ENCODE measurements at regions of chrX and their contacts with region 1.

Region 1: GRCh38 chrX:128816919-128817318 is 706.4 kb downstream of the SMARCA1 start:
- DNase-seq: no peak
- H3K4me3 ChIP-seq: no peak overlapping the region
- H3K27ac ChIP-seq: no peak overlapping the region
- H3K4me1 ChIP-seq: no peaks in the 10 kb centered on the region
- H3K27me3 ChIP-seq: no peaks in the 10 kb centered on the region
- CTCF ChIP-seq: peak in 2 of 3 experiments; percentile 38 to 52; a peak in 2 of 4 replicates
- EP300 ChIP-seq: no peak
- POLR2A ChIP-seq: no peak
- RAD21 ChIP-seq: peak; percentile 55 to 60

Region 2: GRCh38 chrX:128582036-128582435 is 234.9 kb before region 1 on chrX:
- CTCF ChIA-PET with region 1: no interaction called
- POLR2A ChIA-PET with region 1: no interaction called
- DNase-seq: no peak
- H3K4me3 ChIP-seq: no peak overlapping the region
- H3K27ac ChIP-seq: no peak overlapping the region
- H3K4me1 ChIP-seq: no peaks in the 10 kb centered on the region
- H3K27me3 ChIP-seq: no peaks in the 10 kb centered on the region
- CTCF ChIP-seq: no peak
- EP300 ChIP-seq: no peak
- POLR2A ChIP-seq: no peak
- RAD21 ChIP-seq: no peak

Region 3: GRCh38 chrX:128800138-128800537 is 16.8 kb before region 1 on chrX:
- CTCF ChIA-PET with region 1: interaction called, 22 read pairs
- POLR2A ChIA-PET with region 1: no interaction called
- DNase-seq: no peak
- H3K4me3 ChIP-seq: no peak overlapping the region
- H3K27ac ChIP-seq: no peak overlapping the region
- H3K4me1 ChIP-seq: no peaks in the 10 kb centered on the region
- H3K27me3 ChIP-seq: no peaks in the 10 kb centered on the region
- CTCF ChIP-seq: peak in 1 of 3 experiments; percentile 46; a peak in 2 of 4 replicates
- EP300 ChIP-seq: no peak
- POLR2A ChIP-seq: no peak
- RAD21 ChIP-seq: peak; percentile 52 to 58